Body of pancreas (tissue), 4 donors: ENCODE measurements at regions of chr6 and their contacts with region 1.

Region 1: DNA sequence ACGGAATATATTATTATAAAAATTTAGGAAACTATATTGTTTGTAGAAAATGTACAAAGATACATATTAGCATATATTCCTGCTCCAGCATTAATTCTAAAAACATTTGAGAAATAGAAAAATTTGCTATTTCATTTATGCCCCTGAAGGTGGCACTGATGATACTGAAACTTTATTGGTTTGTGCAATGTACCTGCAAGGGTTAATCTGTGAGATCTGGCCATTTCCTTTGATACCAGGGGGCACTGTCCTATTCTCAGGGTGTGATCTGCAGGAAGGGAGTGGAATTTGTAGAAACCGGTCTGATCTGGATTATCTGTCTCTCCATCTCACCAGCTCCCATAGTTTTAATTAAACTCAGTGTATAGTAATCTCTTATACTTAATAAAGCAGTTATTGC is 625.1 kb upstream of the IMPG1 start:
- DNase-seq: no peak
- ATAC-seq: no peak
- H3K4me3 ChIP-seq: no peak overlapping the region
- H3K27ac ChIP-seq: no peak overlapping the region
- H3K4me1 ChIP-seq: no peaks in the 10 kb centered on the region
- H3K27me3 ChIP-seq: no peaks in the 10 kb centered on the region
- CTCF ChIP-seq: peak in 4 of 7 experiments; percentile 17 to 30 (median 22)
- POLR2A ChIP-seq: no peak

Region 2: DNA sequence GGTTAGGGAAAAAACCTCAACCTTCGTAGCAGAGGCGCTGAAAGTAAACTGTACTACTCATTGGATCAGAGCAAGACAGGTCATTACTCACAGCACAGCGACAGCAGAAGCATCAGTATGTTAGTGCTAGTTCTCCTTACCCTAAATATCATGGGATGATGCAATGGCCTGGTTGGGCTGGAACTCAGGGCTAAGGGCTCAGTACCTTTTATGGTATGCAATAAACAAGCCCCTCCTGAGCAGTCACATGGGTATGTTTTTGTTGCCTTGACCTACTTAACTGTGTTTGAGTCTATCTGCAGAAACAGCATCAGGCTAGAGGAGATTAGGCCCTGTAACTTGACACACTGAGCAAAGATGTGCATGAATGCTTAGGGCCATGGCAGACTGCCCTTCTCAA is 255.7 kb before region 1 on chr6:
- intact Hi-C with region 1: no loop called
- DNase-seq: no peak
- ATAC-seq: no peak
- H3K4me3 ChIP-seq: no peak overlapping the region
- H3K27ac ChIP-seq: no peak overlapping the region
- H3K4me1 ChIP-seq: no peaks in the 10 kb centered on the region
- H3K27me3 ChIP-seq: no peaks in the 10 kb centered on the region
- CTCF ChIP-seq: no peak
- POLR2A ChIP-seq: no peak

Region 3: GRCh38 chr6:76490456-76490855 is 207.1 kb before region 1 on chr6:
- intact Hi-C with region 1: no loop called
- DNase-seq: no peak
- ATAC-seq: no peak
- H3K4me3 ChIP-seq: no peak overlapping the region
- H3K27ac ChIP-seq: no peak overlapping the region
- H3K4me1 ChIP-seq: no peaks in the 10 kb centered on the region
- H3K27me3 ChIP-seq: no peaks in the 10 kb centered on the region
- CTCF ChIP-seq: no peak
- POLR2A ChIP-seq: no peak

Region 4: GRCh38 chr6:76861403-76861802 is 163.8 kb after region 1 on chr6:
- intact Hi-C with region 1: loop called (anchors 10 kb)
- DNase-seq: peak in 3 of 4 donors; percentile 16 to 38 (median 36)
- ATAC-seq: peak; percentile 27
- H3K4me3 ChIP-seq: no peak overlapping the region
- H3K27ac ChIP-seq: no peak overlapping the region
- H3K4me1 ChIP-seq: peaks cover 14% of the 10 kb centered on the region
- H3K27me3 ChIP-seq: no peaks in the 10 kb centered on the region
- CTCF ChIP-seq: peak in 3 of 7 experiments; percentile 13 to 33 (median 28)
- POLR2A ChIP-seq: no peak

Region 5: GRCh38 chr6:76885861-76886301 is 188.3 kb after region 1 on chr6:
- intact Hi-C with region 1: loop called (anchors 10 kb)
- DNase-seq: no peak
- ATAC-seq: no peak
- H3K4me3 ChIP-seq: no peak overlapping the region
- H3K27ac ChIP-seq: no peak overlapping the region
- H3K4me1 ChIP-seq: peaks cover 23% of the 10 kb centered on the region
- H3K27me3 ChIP-seq: no peaks in the 10 kb centered on the region
- CTCF ChIP-seq: no peak
- POLR2A ChIP-seq: no peak

Region 6: GRCh38 chr6:77249560-77249959 is 552.0 kb after region 1 on chr6:
- intact Hi-C with region 1: no loop called
- DNase-seq: no peak
- ATAC-seq: no peak
- H3K4me3 ChIP-seq: no peak overlapping the region
- H3K27ac ChIP-seq: no peak overlapping the region
- H3K4me1 ChIP-seq: no peaks in the 10 kb centered on the region
- H3K27me3 ChIP-seq: no peaks in the 10 kb centered on the region
- CTCF ChIP-seq: no peak
- POLR2A ChIP-seq: no peak